CD14-positive monocyte (primary cell): ENCODE measurements at regions of chr6 and their contacts with region 1.

Region 1: GRCh38 chr6:20126789-20127653 is 85.2 kb downstream of the MBOAT1 start:
- DNase-seq: peak; percentile 24 to 50 (median 43)
- H3K4me3 ChIP-seq: no peak overlapping the region
- H3K4me3 Mint-ChIP-seq: no peak overlapping the region
- H3K27ac ChIP-seq: peak overlapping the region in 1 of 2 donors; percentile 5
- H3K27ac Mint-ChIP-seq: peak overlapping the region in 6 of 7 donors; percentile 22 to 70 (median 39)
- H3K4me1 ChIP-seq: no peaks in the 10 kb centered on the region
- H3K4me1 Mint-ChIP-seq: peaks cover 4% of the 10 kb centered on the region
- H3K27me3 ChIP-seq: no peaks in the 10 kb centered on the region
- H3K27me3 Mint-ChIP-seq: peaks cover 0 to 2% (median 0%) of the 10 kb centered on the region in 3 donors
- CTCF ChIP-seq: peak; percentile 98

Region 2: GRCh38 chr6:20212392-20213217 is 85.6 kb after region 1 on chr6 and contains the start of gene MBOAT1:
- intact Hi-C with region 1: loop called in 1 of 2 experiments (anchors 10 kb)
- DNase-seq: peak; percentile 66 to 76 (median 73)
- H3K4me3 ChIP-seq: peak within 1 kb of the TSS; percentile 77 to 94 (median 92)
- H3K4me3 Mint-ChIP-seq: peak within 1 kb of the TSS; percentile 92 to 98
- H3K27ac ChIP-seq: peak within 1 kb of the TSS; percentile 88 to 89
- H3K27ac Mint-ChIP-seq: peak within 1 kb of the TSS; percentile 93 to 98 (median 97)
- H3K4me1 ChIP-seq: peaks cover 36 to 55% of the 10 kb centered on the region in 2 donors
- H3K4me1 Mint-ChIP-seq: peaks cover 61% of the 10 kb centered on the region
- H3K27me3 ChIP-seq: no peaks in the 10 kb centered on the region
- H3K27me3 Mint-ChIP-seq: no peaks in the 10 kb centered on the region
- CTCF ChIP-seq: no peak
- polyA plus RNA-seq, gene MBOAT1: 6.8 to 59.1 (median 8.1) TPM